ENCODE measurements at regions of chr3 and their contacts with region 1.

Region 1: GRCh38 chr3:186084264-186084663 is 24.6 kb downstream of the ETV5 start:
- DNase-seq: no peak
- H3K4me3 ChIP-seq: no peak overlapping the region
- H3K27ac ChIP-seq: no peak overlapping the region
- H3K4me1 ChIP-seq: no peaks in the 10 kb centered on the region
- H3K27me3 ChIP-seq: no peaks in the 10 kb centered on the region
- CTCF ChIP-seq: no peak

Region 2: GRCh38 chr3:185992831-185993374 is 91.4 kb before region 1 on chr3:
- CTCF ChIA-PET with region 1: no interaction called
- POLR2A ChIA-PET with region 1: interaction called, 15 read pairs
- intact Hi-C with region 1: no loop called
- DNase-seq: no peak
- H3K4me3 ChIP-seq: no peak overlapping the region
- H3K27ac ChIP-seq: no peak overlapping the region
- H3K4me1 ChIP-seq: no peaks in the 10 kb centered on the region
- H3K27me3 ChIP-seq: no peaks in the 10 kb centered on the region
- CTCF ChIP-seq: no peak

Region 3: GRCh38 chr3:186060222-186060621 is 24.0 kb before region 1 on chr3:
- CTCF ChIA-PET with region 1: interaction called, 13 read pairs
- POLR2A ChIA-PET with region 1: no interaction called
- intact Hi-C with region 1: no loop called
- DNase-seq: no peak
- H3K4me3 ChIP-seq: no peak overlapping the region
- H3K27ac ChIP-seq: no peak overlapping the region
- H3K4me1 ChIP-seq: no peaks in the 10 kb centered on the region
- H3K27me3 ChIP-seq: no peaks in the 10 kb centered on the region
- CTCF ChIP-seq: no peak

Measured in PC-9 (cell line).